CD4-positive, alpha-beta memory T cell (primary cell): ENCODE measurements at regions of chr7 and their contacts with region 1.

Region 1: GRCh38 chr7:143973870-143974416 is 19.3 kb downstream of the OR2F1 start:
- DNase-seq: no peak
- H3K4me3 ChIP-seq: no peak overlapping the region
- H3K4me3 Mint-ChIP-seq: no peak overlapping the region
- H3K27ac ChIP-seq: no peak overlapping the region
- H3K27ac Mint-ChIP-seq: no peak overlapping the region
- H3K4me1 ChIP-seq: no peaks in the 10 kb centered on the region
- H3K4me1 Mint-ChIP-seq: no peaks in the 10 kb centered on the region
- H3K27me3 ChIP-seq: no peaks in the 10 kb centered on the region
- H3K27me3 Mint-ChIP-seq: peaks cover 3% of the 10 kb centered on the region in 2 donors

Region 2: DNA sequence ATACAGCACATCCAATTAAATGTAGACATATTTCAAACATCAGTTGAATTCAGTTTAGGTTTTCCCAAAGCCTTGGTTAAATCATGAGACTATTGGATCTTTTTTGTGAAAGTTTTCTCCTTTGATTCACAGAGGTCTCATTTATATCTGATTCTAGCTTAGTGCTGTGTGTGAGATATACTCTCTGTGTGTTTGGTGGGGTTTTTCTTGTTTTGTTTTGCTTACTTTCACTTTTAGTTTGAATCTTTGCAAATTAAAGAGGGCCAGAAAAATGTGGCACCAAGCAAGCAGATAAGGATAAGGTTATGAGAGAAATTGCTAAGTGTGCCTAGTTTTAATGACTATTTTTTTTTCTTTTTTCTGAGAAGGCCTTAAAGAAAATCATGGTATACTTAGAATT is 13.6 kb after region 1 on chr7:
- CTCF ChIA-PET with region 1: no interaction called
- POLR2A ChIA-PET with region 1: no interaction called
- intact Hi-C with region 1: loop called (anchors 1 kb)
- DNase-seq: no peak
- H3K4me3 ChIP-seq: no peak overlapping the region
- H3K4me3 Mint-ChIP-seq: peak overlapping the region in 5 of 8 donors; percentile 10 to 80 (median 49)
- H3K27ac ChIP-seq: no peak overlapping the region
- H3K27ac Mint-ChIP-seq: peak overlapping the region in 1 of 7 donors; percentile 7
- H3K4me1 ChIP-seq: no peaks in the 10 kb centered on the region
- H3K4me1 Mint-ChIP-seq: peaks cover 0 to 12% (median 3%) of the 10 kb centered on the region in 4 donors
- H3K27me3 ChIP-seq: no peaks in the 10 kb centered on the region
- H3K27me3 Mint-ChIP-seq: peaks cover 2 to 7% of the 10 kb centered on the region in 2 donors